Activated CD4-positive, alpha-beta T cell treated with anti-CD3 and anti-CD28 coated beads, Interleukin-2, amount 10 ng/mL, durations not matched to agents 7 days and 5 days (primary cell): ENCODE measurements at regions of chr1 and their contacts with region 1.

Region 1: GRCh38 chr1:161117759-161118581 is at the starts of genes NIT1 and PFDN2:
- DNase-seq: peak; percentile 86
- H3K4me3 Mint-ChIP-seq: peak within 1 kb of the TSS; percentile 94
- H3K27ac Mint-ChIP-seq: peak within 1 kb of the TSS; percentile 92
- H3K4me1 Mint-ChIP-seq: peaks cover 71% of the 10 kb centered on the region
- H3K27me3 Mint-ChIP-seq: no peaks in the 10 kb centered on the region
- total RNA-seq, gene NIT1: 37.7 to 39.0 TPM
- total RNA-seq, gene PFDN2: 46.0 to 56.0 TPM

Region 2: GRCh38 chr1:161106431-161106830 is 11.5 kb before region 1 on chr1:
- CTCF ChIA-PET with region 1: interaction called, 11 read pairs
- POLR2A ChIA-PET with region 1: interaction called, 3 read pairs
- DNase-seq: no peak
- H3K4me3 Mint-ChIP-seq: no peak overlapping the region
- H3K27ac Mint-ChIP-seq: no peak overlapping the region
- H3K4me1 Mint-ChIP-seq: peaks cover 15% of the 10 kb centered on the region
- H3K27me3 Mint-ChIP-seq: no peaks in the 10 kb centered on the region

Region 3: DNA sequence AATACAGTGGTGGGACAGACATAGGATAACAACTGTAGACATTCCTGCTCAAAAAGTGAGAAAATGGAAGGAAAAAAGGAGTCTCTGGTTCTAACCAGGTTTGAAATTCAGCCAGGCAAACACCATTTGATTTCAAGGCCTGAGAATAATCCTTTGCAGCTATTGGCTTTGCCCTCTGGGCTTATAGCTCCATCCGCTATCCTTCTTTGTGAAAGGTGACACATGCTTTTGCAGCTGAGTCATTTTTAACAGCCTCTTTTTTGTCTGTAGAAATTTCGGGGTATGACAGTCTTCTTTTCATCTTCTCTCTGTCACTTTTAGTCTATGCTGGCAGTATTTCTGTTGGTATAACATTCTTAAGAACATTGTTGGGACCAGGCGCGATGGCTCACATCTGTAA is 212.4 kb after region 1 on chr1:
- CTCF ChIA-PET with region 1: no interaction called
- POLR2A ChIA-PET with region 1: no interaction called
- DNase-seq: no peak
- H3K4me3 Mint-ChIP-seq: no peak overlapping the region
- H3K27ac Mint-ChIP-seq: no peak overlapping the region
- H3K4me1 Mint-ChIP-seq: no peaks in the 10 kb centered on the region
- H3K27me3 Mint-ChIP-seq: no peaks in the 10 kb centered on the region